Calu3 (cell line): ENCODE measurements at regions of chr5 and their contacts with region 1.

Region 1: DNA sequence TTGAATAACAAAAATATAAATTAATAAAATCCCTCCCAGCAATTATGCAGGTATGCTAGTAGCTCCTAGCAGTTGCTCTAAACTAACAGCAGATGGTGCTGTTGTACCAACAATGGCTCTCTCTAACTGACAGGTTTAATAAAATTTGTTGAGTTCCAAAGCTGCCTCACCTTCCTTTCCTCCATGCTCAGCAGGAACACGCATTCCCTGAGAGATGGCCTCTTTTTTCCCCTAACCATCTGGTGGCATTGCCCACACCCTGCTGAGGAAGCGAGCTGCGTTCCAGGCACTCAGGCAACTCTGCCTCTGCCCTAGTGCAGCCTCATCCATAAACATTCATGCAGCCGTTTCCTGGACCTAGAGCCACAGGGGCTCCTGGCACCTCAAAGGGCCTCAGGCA is 106.2 kb downstream of the KLHL3 start:
- DNase-seq: peak; percentile 39
- H3K4me3 Mint-ChIP-seq: no peak overlapping the region
- H3K27ac Mint-ChIP-seq: no peak overlapping the region
- H3K4me1 Mint-ChIP-seq: peaks cover 14% of the 10 kb centered on the region
- H3K27me3 Mint-ChIP-seq: no peaks in the 10 kb centered on the region
- CTCF ChIP-seq: peak; percentile 93

Region 2: DNA sequence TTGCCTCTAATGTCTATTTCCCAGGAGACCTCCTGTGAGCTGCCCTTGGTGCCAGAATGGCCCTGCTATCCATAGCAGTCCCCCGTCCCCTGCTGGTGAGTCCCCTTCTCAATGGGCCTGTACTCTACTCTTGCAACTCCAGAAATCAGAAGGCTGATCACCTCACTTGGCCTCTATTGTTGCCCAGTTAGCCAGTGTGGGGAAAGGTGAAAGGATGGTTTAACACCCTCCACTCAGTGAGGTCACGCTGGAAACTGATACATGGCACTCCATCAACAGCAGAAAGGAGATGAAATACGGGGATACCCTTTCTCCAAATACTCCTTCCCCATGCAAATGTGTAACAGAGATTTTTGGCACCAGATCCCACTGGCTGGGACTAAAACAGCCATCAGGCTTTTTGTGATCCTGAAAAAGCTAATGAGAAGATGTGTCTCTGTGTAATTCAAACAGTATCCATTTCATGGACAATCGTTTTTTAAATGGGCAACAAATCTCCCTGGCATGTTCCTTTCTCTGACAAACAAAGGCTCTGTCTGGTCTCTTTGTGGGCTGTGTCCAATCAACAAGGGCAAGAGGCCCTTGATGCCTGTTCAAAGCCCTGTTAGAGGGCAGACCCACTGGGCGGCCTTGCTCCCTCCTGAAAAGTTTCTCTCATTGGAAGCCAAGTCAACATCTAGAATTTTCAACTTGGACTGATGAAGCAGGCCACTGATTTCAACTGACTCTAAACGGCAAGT is 474.2 kb before region 1 on chr5:
- CTCF ChIA-PET with region 1: no interaction called
- intact Hi-C with region 1: no loop called
- DNase-seq: no peak
- H3K4me3 Mint-ChIP-seq: no peak overlapping the region
- H3K27ac Mint-ChIP-seq: no peak overlapping the region
- H3K4me1 Mint-ChIP-seq: no peaks in the 10 kb centered on the region
- H3K27me3 Mint-ChIP-seq: peaks cover 18% of the 10 kb centered on the region
- CTCF ChIP-seq: no peak

Region 3: DNA sequence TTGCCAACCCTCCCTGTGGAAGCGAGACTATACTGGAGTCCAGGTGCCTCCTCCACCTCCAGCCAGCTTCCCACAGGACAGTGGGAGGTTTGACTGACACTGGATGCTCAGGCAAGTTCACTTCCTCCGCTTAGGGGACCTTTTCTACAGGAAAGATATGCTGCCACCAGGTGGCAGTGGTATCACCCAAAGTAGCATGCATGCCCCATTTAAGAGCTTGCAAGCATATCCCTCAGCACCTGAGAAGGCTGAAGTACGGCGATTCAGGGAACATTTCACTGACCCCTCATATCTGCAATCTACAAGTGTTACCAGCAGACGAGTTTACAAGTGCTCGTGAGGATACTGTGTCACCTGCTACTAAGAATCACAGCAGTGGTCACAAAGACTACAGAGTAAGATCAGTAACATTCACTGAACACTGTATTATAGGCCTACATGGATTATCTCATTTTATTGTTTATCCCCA is 30.7 kb after region 1 on chr5:
- CTCF ChIA-PET with region 1: interaction called, 21 read pairs
- intact Hi-C with region 1: loop called (anchors 2 kb)
- DNase-seq: peak; percentile 78
- H3K4me3 Mint-ChIP-seq: no peak overlapping the region
- H3K27ac Mint-ChIP-seq: no peak overlapping the region
- H3K4me1 Mint-ChIP-seq: peaks cover 30% of the 10 kb centered on the region
- H3K27me3 Mint-ChIP-seq: no peaks in the 10 kb centered on the region
- CTCF ChIP-seq: peak; percentile 85

Region 4: GRCh38 chr5:137743031-137743640 is 113.5 kb after region 1 on chr5:
- CTCF ChIA-PET with region 1: interaction called, 62 read pairs
- intact Hi-C with region 1: loop called (anchors 1 kb)
- DNase-seq: peak; percentile 71
- H3K4me3 Mint-ChIP-seq: no peak overlapping the region
- H3K27ac Mint-ChIP-seq: no peak overlapping the region
- H3K4me1 Mint-ChIP-seq: no peaks in the 10 kb centered on the region
- H3K27me3 Mint-ChIP-seq: no peaks in the 10 kb centered on the region
- CTCF ChIP-seq: peak; percentile 68

Region 5: GRCh38 chr5:137822158-137822764 is 192.6 kb after region 1 on chr5:
- CTCF ChIA-PET with region 1: interaction called, 3 read pairs
- intact Hi-C with region 1: loop called (anchors 1 kb)
- DNase-seq: peak; percentile 75
- H3K4me3 Mint-ChIP-seq: no peak overlapping the region
- H3K27ac Mint-ChIP-seq: no peak overlapping the region
- H3K4me1 Mint-ChIP-seq: peaks cover 21% of the 10 kb centered on the region
- H3K27me3 Mint-ChIP-seq: no peaks in the 10 kb centered on the region
- CTCF ChIP-seq: peak; percentile 60

Region 6: GRCh38 chr5:138138949-138139780 is 509.5 kb after region 1 on chr5 and contains the start of gene NME5:
- CTCF ChIA-PET with region 1: no interaction called
- intact Hi-C with region 1: loop called (anchors 10 kb)
- DNase-seq: peak; percentile 76
- H3K4me3 Mint-ChIP-seq: peak within 1 kb of the TSS; percentile 70
- H3K27ac Mint-ChIP-seq: no peak within 1 kb of the TSS
- H3K4me1 Mint-ChIP-seq: no peaks in the 10 kb centered on the region
- H3K27me3 Mint-ChIP-seq: no peaks in the 10 kb centered on the region
- CTCF ChIP-seq: no peak
- total RNA-seq, gene NME5: 3.9 and 4.0 TPM in 2 replicates